PC-3 (cell line): ENCODE measurements at regions of chr17 and their contacts with region 1.

Region 1: GRCh38 chr17:29640413-29640812 is 17.7 kb upstream of the CORO6 start:
- DNase-seq: no peak
- ATAC-seq: no peak
- H3K4me3 ChIP-seq: no peak overlapping the region
- H3K27ac ChIP-seq: no peak overlapping the region
- H3K4me1 ChIP-seq: peaks cover 14% of the 10 kb centered on the region
- H3K27me3 ChIP-seq: no peaks in the 10 kb centered on the region
- CTCF ChIP-seq: no peak

Region 2: GRCh38 chr17:29664743-29665480 is 24.5 kb after region 1 on chr17:
- CTCF ChIA-PET with region 1: interaction called, 5 read pairs
- POLR2A ChIA-PET with region 1: no interaction called
- intact Hi-C with region 1: loop called (anchors 2 kb)
- DNase-seq: peak; percentile 80
- ATAC-seq: peak; percentile 97
- H3K4me3 ChIP-seq: no peak overlapping the region
- H3K27ac ChIP-seq: peak overlapping the region; percentile 97
- H3K4me1 ChIP-seq: peaks cover 32% of the 10 kb centered on the region
- H3K27me3 ChIP-seq: no peaks in the 10 kb centered on the region
- CTCF ChIP-seq: no peak

Region 3: GRCh38 chr17:29744121-29744520 is 103.7 kb after region 1 on chr17:
- CTCF ChIA-PET with region 1: no interaction called
- POLR2A ChIA-PET with region 1: no interaction called
- intact Hi-C with region 1: loop called (anchors 1 kb)
- DNase-seq: no peak
- ATAC-seq: no peak
- H3K4me3 ChIP-seq: no peak overlapping the region
- H3K27ac ChIP-seq: peak overlapping the region; percentile 65
- H3K4me1 ChIP-seq: peaks cover 19% of the 10 kb centered on the region
- H3K27me3 ChIP-seq: no peaks in the 10 kb centered on the region
- CTCF ChIP-seq: no peak

Region 4: DNA sequence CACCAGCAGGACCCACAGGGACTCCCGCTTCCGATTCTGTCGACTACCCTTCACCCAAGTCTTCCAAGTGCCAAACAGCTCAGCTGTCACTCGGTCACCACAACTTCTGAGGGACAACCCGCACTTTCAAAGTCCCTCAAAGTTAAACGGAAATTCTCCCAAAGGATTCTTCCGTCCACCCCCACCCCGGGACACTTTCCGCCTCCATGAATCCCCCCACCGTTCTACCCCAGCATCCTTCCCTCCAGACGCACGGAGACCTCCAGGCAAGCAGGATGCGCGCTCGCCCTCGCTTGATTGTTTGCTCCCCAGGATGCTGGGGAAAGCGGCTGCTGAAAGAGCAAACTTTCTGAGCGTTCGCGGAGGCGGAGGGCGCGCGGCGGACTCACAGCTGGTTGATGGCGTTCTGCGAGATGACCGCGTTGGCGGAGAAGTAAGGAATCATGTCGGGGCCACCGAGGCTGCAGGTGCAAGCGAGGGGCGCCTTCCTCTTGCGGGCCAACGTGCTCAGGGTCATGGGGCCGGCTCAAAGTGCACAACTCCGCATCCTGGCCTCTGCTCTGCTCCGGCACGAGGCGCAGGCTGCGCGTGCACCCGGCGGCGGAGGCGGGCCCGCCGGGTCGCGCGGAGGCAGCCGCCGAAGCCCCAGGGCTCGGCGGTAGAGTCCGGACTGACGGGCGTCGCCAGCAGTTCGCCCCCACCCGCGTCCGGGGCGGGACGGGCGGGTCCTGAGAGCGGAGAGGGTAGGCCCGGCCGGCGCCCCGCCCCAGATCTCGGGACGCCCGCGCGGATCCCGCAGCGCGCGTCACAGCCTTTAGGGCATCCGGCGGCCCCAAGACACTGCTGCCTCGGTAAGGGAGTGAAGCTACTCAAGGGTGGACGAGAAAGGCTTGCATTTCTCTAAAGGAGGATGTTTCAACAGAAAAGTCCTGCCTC is 120.6 kb after region 1 on chr17:
- CTCF ChIA-PET with region 1: no interaction called
- POLR2A ChIA-PET with region 1: no interaction called
- intact Hi-C with region 1: loop called (anchors 5 kb)
- DNase-seq: peak; percentile 87
- ATAC-seq: peak; percentile 98
- H3K4me3 ChIP-seq: peak overlapping the region; percentile 93
- H3K27ac ChIP-seq: peak overlapping the region; percentile 46
- H3K4me1 ChIP-seq: peaks cover 5% of the 10 kb centered on the region; the same call in 1 of the 2 replicates
- H3K27me3 ChIP-seq: no peaks in the 10 kb centered on the region
- CTCF ChIP-seq: no peak

Region 5: GRCh38 chr17:29777663-29778062 is 137.2 kb after region 1 on chr17:
- CTCF ChIA-PET with region 1: interaction called, 38 read pairs
- POLR2A ChIA-PET with region 1: no interaction called
- intact Hi-C with region 1: loop called (anchors 1 kb)
- DNase-seq: no peak
- ATAC-seq: no peak
- H3K4me3 ChIP-seq: no peak overlapping the region
- H3K27ac ChIP-seq: no peak overlapping the region
- H3K4me1 ChIP-seq: no peaks in the 10 kb centered on the region
- H3K27me3 ChIP-seq: no peaks in the 10 kb centered on the region
- CTCF ChIP-seq: no peak

Region 6: GRCh38 chr17:30345527-30346075 is 705.2 kb after region 1 on chr17:
- CTCF ChIA-PET with region 1: no interaction called
- POLR2A ChIA-PET with region 1: no interaction called
- intact Hi-C with region 1: no loop called
- DNase-seq: no peak
- ATAC-seq: no peak
- H3K4me3 ChIP-seq: no peak overlapping the region
- H3K27ac ChIP-seq: peak overlapping the region; percentile 80
- H3K4me1 ChIP-seq: peaks cover 32% of the 10 kb centered on the region
- H3K27me3 ChIP-seq: no peaks in the 10 kb centered on the region
- CTCF ChIP-seq: no peak